Breast epithelium (tissue), 4 donors: ENCODE measurements at regions of chr1 and their contacts with region 1.

Region 1: DNA sequence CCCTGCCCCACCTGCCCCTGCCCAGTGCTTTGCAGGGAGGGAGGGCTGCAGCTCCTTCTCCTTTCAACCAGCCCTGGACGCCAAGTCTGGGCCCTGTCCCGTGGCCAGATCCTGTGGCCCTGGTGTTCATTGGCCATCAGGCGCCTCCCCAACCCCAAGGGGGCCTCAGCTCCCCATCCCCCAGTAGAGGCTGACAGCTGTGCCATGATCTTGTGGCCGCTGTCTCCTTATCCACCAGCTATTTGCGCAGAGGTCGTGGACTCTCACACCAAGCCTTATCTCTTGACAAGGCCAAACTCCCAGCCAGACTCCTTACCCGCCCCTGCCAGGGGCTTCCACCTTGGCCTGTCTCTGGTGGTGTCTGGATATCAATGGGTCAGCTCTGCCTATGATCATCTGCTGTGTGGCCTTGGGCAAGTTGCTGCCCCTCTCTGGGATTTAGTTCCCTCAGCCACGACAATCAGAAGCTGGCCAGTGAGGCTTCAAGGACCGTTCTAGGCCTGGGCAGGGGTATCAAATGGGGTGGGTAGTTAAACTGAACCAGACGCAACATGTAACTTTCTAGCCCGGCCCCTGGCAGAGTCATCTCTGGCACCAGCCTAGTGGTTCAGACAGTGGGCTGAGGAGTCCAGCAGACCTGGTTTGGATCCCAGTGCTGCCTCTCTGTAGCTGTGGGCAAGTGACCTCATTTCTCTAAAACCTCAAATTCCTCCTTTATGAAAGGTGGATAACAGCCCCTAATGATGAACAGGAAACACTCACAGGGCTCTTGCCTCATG is 3.3 kb upstream of the COL8A2 start:
- DNase-seq: peak in 1 of 2 donors; percentile 57
- H3K4me3 ChIP-seq: no peak overlapping the region
- H3K27ac ChIP-seq: peak overlapping the region in 1 of 2 donors; percentile 37
- H3K4me1 ChIP-seq: no peaks in the 10 kb centered on the region
- H3K27me3 ChIP-seq: no peaks in the 10 kb centered on the region
- CTCF ChIP-seq: no peak
- POLR2A ChIP-seq: no peak

Region 2: DNA sequence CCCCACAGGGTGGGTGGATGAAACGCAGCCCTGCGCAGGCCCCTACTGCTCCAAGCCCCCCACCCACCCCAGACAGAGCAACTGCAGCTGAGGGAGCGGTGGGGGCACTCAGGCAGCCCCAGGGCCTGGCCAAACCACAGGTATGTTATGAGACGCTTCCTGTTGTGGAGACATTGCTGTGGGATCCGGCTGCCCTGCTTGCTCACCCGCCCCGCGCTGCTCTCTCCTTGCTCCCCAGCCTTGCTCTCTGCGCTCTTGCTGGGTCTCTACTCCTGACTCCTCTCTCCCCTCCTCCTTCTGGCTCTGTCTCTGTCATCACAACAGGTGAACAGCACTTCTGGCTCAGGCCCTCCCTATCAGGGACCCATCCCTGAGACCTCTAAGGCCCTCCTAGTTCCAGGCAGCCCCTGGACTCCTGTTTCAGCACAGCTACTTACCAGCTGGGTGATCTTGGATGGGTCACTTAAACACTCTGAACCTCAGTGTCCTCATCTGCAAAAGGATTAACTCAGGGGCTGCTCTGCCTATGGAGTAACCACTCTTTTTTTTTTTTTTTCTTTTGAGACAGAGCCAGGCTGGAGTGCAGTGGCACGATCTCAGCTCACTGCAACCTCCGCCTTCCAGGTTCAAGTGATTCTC is 19.2 kb before region 1 on chr1:
- intact Hi-C with region 1: loop called (anchors 1 kb)
- DNase-seq: peak in 1 of 2 donors; percentile 86
- H3K4me3 ChIP-seq: peak overlapping the region in 1 of 3 donors; percentile 23
- H3K27ac ChIP-seq: peak overlapping the region; percentile 84 to 89
- H3K4me1 ChIP-seq: peaks cover 3 to 10% of the 10 kb centered on the region in 2 donors
- H3K27me3 ChIP-seq: no peaks in the 10 kb centered on the region
- CTCF ChIP-seq: no peak
- POLR2A ChIP-seq: no peak

Region 3: DNA sequence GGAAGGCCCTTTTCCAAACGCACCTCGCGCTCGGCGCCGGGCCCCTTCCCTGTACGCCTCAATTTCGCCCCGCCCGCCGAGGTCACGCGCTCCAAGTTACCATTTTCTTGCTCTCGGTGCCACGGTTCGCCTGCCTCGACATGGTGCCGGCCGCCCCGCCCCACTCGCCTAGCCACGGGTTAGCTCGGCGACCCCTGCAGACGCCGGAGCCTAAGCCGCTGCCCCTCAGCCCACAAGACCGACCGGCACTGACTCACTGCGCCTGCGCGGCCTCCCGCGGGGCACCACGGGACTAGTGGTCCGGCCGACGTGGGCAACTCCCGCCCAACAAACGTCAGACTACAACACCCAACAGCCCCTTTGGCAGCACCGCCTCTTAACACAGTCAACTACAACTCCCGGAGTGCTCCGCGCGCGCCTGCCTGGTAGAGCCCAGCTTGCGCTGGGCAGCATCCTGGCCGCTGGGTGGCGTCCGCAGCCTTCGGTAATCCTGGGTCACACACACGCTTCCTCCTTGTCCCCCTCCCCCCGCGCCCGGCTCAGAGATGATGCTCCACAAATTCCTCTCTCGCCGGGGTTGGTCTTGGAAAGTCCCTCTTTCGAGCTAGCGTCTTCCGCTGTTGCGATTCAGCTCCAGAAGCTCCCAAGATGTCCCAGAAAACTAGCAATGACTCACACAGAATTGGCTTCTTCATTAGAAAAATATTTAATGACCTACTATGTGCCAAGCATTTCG is 21.1 kb after region 1 on chr1 and contains the start of gene TRAPPC3:
- intact Hi-C with region 1: no loop called
- DNase-seq: peak; percentile 99 to 100
- H3K4me3 ChIP-seq: peak within 1 kb of the TSS; percentile 79 to 88 (median 87)
- H3K27ac ChIP-seq: peak within 1 kb of the TSS; percentile 94 to 98
- H3K4me1 ChIP-seq: peaks cover 11 to 27% of the 10 kb centered on the region in 2 donors
- H3K27me3 ChIP-seq: no peaks in the 10 kb centered on the region
- CTCF ChIP-seq: peak; percentile 87 to 99 (median 99)
- POLR2A ChIP-seq: peak; percentile 89
- total RNA-seq, gene TRAPPC3: 107 to 118 (median 116) TPM

Region 4: DNA sequence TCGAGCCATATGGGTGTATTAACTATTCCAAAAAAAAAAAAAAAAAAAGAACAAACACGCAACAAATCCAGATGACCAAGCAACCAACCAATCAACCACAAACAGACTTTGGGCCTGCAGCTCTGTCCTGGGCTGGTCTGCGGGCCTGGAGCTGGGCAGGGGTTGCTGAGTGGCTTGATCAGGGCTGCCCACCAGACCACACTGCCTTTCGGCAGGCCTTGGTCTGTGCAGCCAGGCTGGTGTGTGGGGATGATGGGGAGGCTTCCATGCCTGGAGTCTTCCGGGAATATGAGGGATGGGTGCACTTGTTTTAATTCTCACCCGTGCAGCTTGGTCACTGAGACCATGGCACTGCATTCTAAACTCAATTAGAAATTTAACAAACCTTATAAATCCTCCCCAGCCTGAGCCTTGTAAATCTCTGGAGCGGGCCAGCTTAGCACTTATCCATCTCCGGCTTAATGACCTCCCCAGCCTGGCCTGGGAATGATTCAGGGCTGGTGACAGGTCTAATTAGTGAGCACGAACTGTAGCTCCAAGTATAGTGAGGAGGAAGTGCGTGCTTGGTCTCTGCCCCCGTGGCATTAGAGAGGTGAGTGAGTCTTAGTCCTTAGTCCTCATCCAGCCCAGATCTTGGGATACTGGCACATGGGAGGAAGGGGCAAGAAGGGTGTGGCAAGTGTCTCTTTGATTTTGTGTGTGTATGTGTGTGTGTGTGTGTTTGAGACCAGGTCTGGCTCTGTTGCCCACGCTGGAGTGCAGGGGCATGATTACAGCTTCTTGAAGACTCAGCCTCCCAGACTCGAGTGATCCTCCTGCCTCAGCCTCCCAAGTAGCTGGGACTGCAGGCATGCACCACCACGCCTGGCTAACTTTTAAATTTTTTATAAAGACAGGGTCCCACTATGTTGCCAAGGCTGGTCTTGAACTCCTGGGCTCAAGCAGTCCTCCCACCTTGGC is 429.0 kb after region 1 on chr1:
- intact Hi-C with region 1: no loop called
- DNase-seq: peak in 1 of 2 donors; percentile 34
- H3K4me3 ChIP-seq: no peak overlapping the region
- H3K27ac ChIP-seq: no peak overlapping the region
- H3K4me1 ChIP-seq: no peaks in the 10 kb centered on the region
- H3K27me3 ChIP-seq: peaks cover 0 to 33% of the 10 kb centered on the region in 2 donors
- CTCF ChIP-seq: no peak
- POLR2A ChIP-seq: no peak